Transverse colon (tissue), 4 donors: ENCODE measurements at regions of chr6 and their contacts with region 1.

Region 1: DNA sequence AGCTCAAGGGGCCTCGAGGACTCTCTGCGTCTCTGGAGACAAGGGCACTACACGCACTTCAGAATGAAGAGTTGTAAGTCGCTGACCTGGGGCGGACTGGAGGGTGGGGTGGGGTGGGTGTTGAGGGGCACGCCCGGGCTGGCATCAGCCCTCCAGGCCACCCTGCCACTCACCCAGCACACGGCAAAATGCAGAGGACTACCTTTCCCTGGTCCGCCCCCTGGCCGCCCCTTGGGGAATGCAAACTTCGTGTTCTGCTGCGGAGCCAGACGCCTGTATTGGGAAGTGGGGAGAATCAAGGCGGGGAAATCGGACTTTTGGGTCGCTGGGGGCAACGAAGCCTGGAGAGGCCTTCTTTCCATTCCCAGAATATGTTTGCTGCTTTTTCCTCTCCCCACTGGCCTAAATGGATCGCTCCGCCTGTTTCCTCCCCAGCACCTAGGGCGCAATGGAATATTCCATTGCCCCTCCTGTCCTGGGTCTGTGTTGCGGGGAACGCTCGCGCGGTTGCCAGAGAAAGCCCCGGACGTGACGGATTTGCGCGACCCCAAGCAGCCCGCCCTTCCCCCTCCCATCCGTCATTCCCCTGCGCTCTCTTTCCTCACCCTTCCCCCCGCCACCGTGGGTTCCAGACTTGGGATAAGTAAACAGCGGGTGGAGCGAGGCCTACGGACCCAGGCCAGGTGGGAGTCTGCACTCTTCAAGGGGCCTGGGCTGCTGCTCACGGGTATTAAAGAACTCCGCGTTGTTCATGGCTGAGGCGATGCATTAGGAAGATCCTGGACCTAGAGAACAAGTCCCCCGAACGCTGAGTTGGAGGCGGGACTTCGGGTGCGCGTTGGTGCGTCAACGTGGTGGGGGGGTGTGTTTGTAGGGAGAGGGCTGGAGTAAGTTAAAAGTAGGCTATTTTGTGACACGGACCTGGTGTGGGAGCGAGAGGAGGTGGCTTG is at the start of gene PPT2:
- DNase-seq: peak; percentile 88
- H3K4me3 ChIP-seq: peak within 1 kb of the TSS; percentile 48 to 85 (median 70)
- H3K27ac ChIP-seq: peak within 1 kb of the TSS; percentile 85 to 97 (median 90)
- H3K4me1 ChIP-seq: peaks cover 15 to 38% (median 36%) of the 10 kb centered on the region in 4 donors
- H3K27me3 ChIP-seq: peaks cover 3% of the 10 kb centered on the region
- CTCF ChIP-seq: peak in 2 of 5 experiments; percentile 25 to 28
- EP300 ChIP-seq: no peak
- POLR2A ChIP-seq: no peak
- total RNA-seq, gene PPT2: 13.1 to 80.0 (median 28.1) TPM

Region 2: GRCh38 chr6:31652925-31653718 is 500.7 kb before region 1 on chr6:
- in situ Hi-C with region 1: no loop called
- intact Hi-C with region 1: loop called (anchors 5 kb)
- DNase-seq: peak; percentile 91
- H3K4me3 ChIP-seq: peak overlapping the region; percentile 28 to 75 (median 56)
- H3K27ac ChIP-seq: peak overlapping the region; percentile 91 to 99 (median 94)
- H3K4me1 ChIP-seq: peaks cover 5 to 45% (median 26%) of the 10 kb centered on the region in 4 donors
- H3K27me3 ChIP-seq: no peaks in the 10 kb centered on the region
- CTCF ChIP-seq: no peak
- EP300 ChIP-seq: no peak
- POLR2A ChIP-seq: peak; percentile 83

Region 3: GRCh38 chr6:32070814-32071543 is 82.9 kb before region 1 on chr6:
- in situ Hi-C with region 1: no loop called
- intact Hi-C with region 1: no loop called
- DNase-seq: no peak
- H3K4me3 ChIP-seq: no peak overlapping the region
- H3K27ac ChIP-seq: peak overlapping the region; percentile 6 to 62 (median 34)
- H3K4me1 ChIP-seq: no peaks in the 10 kb centered on the region
- H3K27me3 ChIP-seq: no peaks in the 10 kb centered on the region
- CTCF ChIP-seq: no peak
- EP300 ChIP-seq: no peak
- POLR2A ChIP-seq: no peak

Region 4: DNA sequence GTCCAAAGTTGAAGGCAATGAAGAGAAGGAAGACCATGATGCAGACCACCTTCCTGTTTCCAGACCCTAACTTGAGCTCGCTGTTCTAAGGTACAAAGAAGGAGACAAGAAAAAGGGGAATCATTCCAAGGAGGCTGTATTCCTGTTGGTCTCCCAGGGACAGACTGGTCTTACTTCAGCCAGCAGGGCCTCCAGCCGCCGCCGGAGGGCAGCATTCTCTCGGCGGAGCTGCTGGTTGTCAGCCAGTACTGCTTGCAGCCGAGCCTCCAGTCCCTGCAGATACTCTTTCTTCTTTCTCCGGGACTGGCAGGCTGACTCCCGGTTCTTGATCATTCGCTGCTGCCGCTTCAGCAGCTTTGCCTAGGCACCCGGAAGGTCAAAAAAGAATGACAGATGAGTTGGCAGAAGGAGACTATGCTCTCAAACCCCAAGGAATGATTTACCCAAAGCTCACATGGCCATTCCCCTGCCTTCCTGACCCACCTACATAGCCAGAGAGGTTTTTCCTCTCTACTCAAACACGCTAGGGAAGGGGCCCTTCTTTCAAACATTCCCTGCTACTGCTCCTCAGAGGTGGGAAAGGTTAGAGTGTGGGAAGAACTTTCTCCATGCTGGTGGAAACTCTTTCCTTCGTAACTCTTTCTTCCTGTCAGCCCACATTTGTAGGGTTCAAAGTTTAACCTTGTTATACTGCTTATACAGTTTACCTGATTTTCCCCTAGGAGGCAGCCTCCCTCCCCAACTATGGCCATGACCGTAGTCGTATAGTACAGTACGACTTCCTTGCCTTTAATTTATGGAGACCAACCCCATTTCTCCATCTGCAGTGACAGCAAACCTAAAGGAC is 34.8 kb before region 1 on chr6:
- in situ Hi-C with region 1: no loop called
- intact Hi-C with region 1: loop called (anchors 2 kb)
- DNase-seq: peak; percentile 90
- H3K4me3 ChIP-seq: peak overlapping the region in 1 of 4 donors; percentile 25
- H3K27ac ChIP-seq: peak overlapping the region; percentile 75 to 84 (median 78)
- H3K4me1 ChIP-seq: peaks cover 7 to 26% (median 12%) of the 10 kb centered on the region in 4 donors
- H3K27me3 ChIP-seq: no peaks in the 10 kb centered on the region
- CTCF ChIP-seq: peak; percentile 87 to 93 (median 89)
- EP300 ChIP-seq: no peak
- POLR2A ChIP-seq: no peak

Region 5: DNA sequence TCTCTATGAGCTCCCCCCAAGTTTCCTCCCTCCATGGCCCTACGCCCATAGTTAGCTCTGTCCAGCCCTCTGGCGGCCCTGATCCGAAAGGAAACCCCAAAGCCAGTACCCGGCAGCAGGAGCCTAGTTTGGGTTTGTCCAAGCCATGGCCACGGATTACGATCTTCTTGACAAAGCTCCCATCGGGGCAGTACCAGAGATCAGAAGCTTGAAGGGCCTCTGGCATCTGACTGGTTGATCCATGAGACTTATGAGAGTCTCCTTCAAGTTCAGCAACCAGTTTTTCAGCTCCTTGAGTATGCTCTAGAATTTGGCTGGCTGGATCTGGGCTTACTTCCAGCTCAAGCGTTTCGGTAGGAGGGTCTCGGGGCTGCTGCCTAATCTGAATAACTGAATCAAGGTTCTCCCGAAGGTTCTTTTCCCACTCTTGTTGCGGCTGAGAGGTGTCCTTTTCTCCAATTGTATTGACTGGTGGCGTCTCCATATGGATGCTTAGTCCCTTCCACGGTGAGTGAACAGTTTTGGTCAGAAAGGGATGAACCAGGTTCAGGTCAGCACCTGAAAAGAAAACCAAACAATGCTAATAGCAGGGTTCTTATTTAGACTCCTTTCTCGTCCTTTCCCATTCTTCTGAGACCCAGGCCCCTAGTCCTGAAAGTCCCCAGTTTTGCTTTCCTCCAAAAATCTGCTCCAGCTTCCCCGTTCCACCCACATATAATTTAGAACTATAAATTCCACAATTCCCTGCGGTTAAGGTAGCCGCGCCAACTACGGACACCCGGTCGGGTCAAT is 24.3 kb before region 1 on chr6:
- in situ Hi-C with region 1: no loop called
- intact Hi-C with region 1: loop called (anchors 1 kb)
- DNase-seq: no peak
- H3K4me3 ChIP-seq: peak overlapping the region; percentile 39 to 83 (median 58)
- H3K27ac ChIP-seq: peak overlapping the region; percentile 91 to 92 (median 91)
- H3K4me1 ChIP-seq: peaks cover 24 to 31% (median 26%) of the 10 kb centered on the region in 4 donors
- H3K27me3 ChIP-seq: no peaks in the 10 kb centered on the region
- CTCF ChIP-seq: peak in 1 of 5 experiments; percentile 9
- EP300 ChIP-seq: no peak
- POLR2A ChIP-seq: no peak

Region 6: DNA sequence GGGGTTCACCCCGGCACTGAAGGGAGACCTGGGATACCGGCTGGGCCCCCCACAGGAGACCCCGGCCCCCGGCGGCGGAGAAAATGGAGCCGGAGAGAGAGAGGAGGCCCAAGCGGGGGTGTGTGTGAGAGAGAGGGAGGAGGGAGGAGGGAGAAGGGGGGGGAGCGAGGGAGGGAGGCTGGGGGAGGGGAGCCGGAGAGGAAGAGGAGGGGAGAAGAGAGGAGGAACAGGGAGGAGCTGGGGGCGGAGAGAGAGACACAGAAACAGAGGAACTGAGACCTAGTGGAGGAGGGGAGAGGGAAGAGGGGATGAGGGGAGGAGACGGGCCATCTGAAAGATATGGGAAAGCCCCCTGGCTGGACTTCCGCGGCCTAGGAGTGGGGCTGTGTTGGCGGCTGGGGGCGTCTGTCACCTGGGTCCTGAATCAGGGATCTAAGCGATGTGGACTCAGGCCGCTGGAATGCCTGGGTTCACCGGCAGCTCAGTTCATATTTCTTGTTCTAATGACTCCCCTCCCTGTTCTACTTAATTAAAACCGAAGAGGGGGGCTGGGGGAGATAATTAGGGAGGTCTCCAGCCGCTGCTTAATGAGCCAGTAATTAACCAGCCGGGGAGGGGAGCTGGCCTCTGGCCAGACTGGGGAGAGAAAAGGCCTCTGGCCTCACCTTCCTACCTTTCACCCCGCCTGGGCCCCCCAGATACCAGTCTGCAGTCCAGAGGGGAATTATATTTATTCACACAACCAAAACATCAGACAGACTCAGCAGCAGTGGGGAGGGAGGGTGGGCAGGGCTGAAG is 36.4 kb after region 1 on chr6 and contains the start of gene PBX2:
- in situ Hi-C with region 1: no loop called
- intact Hi-C with region 1: loop called (anchors 2 kb)
- DNase-seq: peak; percentile 94
- H3K4me3 ChIP-seq: peak within 1 kb of the TSS; percentile 77 to 95 (median 86)
- H3K27ac ChIP-seq: peak within 1 kb of the TSS; percentile 92 to 98 (median 98)
- H3K4me1 ChIP-seq: peaks cover 21 to 70% (median 45%) of the 10 kb centered on the region in 4 donors
- H3K27me3 ChIP-seq: no peaks in the 10 kb centered on the region
- CTCF ChIP-seq: no peak
- EP300 ChIP-seq: no peak
- POLR2A ChIP-seq: peak; percentile 75
- total RNA-seq, gene PBX2: 34.4 to 87.5 (median 41.3) TPM

Region 7: GRCh38 chr6:32298663-32299267 is 144.9 kb after region 1 on chr6:
- in situ Hi-C with region 1: no loop called
- intact Hi-C with region 1: no loop called
- DNase-seq: no peak
- H3K4me3 ChIP-seq: no peak overlapping the region
- H3K27ac ChIP-seq: no peak overlapping the region
- H3K4me1 ChIP-seq: no peaks in the 10 kb centered on the region
- H3K27me3 ChIP-seq: peaks cover 4% of the 10 kb centered on the region
- CTCF ChIP-seq: no peak
- EP300 ChIP-seq: no peak
- POLR2A ChIP-seq: no peak